PC-3 (cell line): ENCODE measurements at regions of chr11 and their contacts with region 1.

Region 1: GRCh38 chr11:117107701-117108590 is 9.7 kb upstream of the SIK3 start:
- DNase-seq: no peak
- ATAC-seq: no peak
- H3K4me3 ChIP-seq: no peak overlapping the region
- H3K27ac ChIP-seq: no peak overlapping the region
- H3K4me1 ChIP-seq: peaks cover 3% of the 10 kb centered on the region; the same call in 1 of the 2 replicates
- H3K27me3 ChIP-seq: no peaks in the 10 kb centered on the region
- CTCF ChIP-seq: no peak

Region 2: GRCh38 chr11:116732271-116733042 is 375.5 kb before region 1 on chr11:
- CTCF ChIA-PET with region 1: no interaction called
- POLR2A ChIA-PET with region 1: no interaction called
- intact Hi-C with region 1: loop called (anchors 2 kb)
- DNase-seq: peak; percentile 81
- ATAC-seq: peak; percentile 91
- H3K4me3 ChIP-seq: no peak overlapping the region
- H3K27ac ChIP-seq: no peak overlapping the region
- H3K4me1 ChIP-seq: no peaks in the 10 kb centered on the region
- H3K27me3 ChIP-seq: no peaks in the 10 kb centered on the region
- CTCF ChIP-seq: peak; percentile 84

Region 3: GRCh38 chr11:116772443-116773202 is 335.3 kb before region 1 on chr11 and contains the start of gene BUD13:
- CTCF ChIA-PET with region 1: no interaction called
- POLR2A ChIA-PET with region 1: no interaction called
- intact Hi-C with region 1: loop called (anchors 5 kb)
- DNase-seq: peak; percentile 94
- ATAC-seq: peak; percentile 86
- H3K4me3 ChIP-seq: peak within 1 kb of the TSS; percentile 98
- H3K27ac ChIP-seq: peak within 1 kb of the TSS; percentile 75
- H3K4me1 ChIP-seq: peaks cover 23% of the 10 kb centered on the region
- H3K27me3 ChIP-seq: no peaks in the 10 kb centered on the region
- CTCF ChIP-seq: no peak
- total RNA-seq, gene BUD13: 28.9 and 38.0 TPM in 2 replicates

Region 4: DNA sequence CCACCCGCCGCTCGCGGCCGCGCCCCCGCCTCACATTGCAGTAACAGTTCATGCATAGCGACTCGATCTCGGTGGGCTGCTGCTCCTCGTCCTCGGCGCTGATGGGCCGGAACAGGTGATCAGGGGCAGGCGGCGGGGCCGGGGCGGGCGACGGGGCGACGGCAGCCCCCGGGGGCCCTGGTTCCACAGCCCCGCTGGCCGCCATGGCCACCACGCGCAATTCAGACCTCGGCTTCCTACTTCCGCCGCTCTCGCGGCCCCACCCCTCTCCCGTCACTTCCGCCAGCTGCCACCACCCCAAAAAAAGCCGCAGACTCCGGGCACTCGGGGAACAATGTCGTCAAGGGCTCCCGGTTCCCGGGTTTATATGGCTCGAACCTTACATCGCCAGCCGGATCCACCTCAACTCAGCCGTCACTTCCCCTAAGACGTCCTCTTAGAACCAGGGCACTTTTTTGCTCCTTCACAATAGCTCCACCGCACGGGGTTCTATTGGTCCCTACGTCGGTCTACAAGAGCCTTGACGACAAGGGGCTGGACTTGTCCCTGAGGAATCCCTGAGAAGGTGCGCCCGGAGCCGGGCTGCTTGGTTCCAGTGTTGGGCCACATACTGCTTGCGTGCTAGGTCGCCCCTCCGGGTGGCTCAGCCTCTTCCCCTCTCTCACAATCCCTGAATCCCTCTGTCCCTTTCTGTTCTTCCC is 320.0 kb before region 1 on chr11 and contains the start of gene ZPR1:
- CTCF ChIA-PET with region 1: interaction called, 6 read pairs
- POLR2A ChIA-PET with region 1: no interaction called
- intact Hi-C with region 1: loop called (anchors 5 kb)
- DNase-seq: peak; percentile 64
- ATAC-seq: peak; percentile 81
- H3K4me3 ChIP-seq: peak within 1 kb of the TSS; percentile 83
- H3K27ac ChIP-seq: peak within 1 kb of the TSS; percentile 11; the same call in 1 of the 2 replicates
- H3K4me1 ChIP-seq: peaks cover 37% of the 10 kb centered on the region
- H3K27me3 ChIP-seq: no peaks in the 10 kb centered on the region
- CTCF ChIP-seq: no peak
- total RNA-seq, gene ZPR1: 86.5 and 89.5 TPM in 2 replicates

Region 5: GRCh38 chr11:116879800-116880625 is 227.9 kb before region 1 on chr11:
- CTCF ChIA-PET with region 1: interaction called, 3 read pairs
- POLR2A ChIA-PET with region 1: no interaction called
- intact Hi-C with region 1: loop called (anchors 1 kb)
- DNase-seq: peak; percentile 86
- ATAC-seq: peak; percentile 100
- H3K4me3 ChIP-seq: no peak overlapping the region
- H3K27ac ChIP-seq: no peak overlapping the region
- H3K4me1 ChIP-seq: no peaks in the 10 kb centered on the region; the same call in 1 of the 2 replicates
- H3K27me3 ChIP-seq: no peaks in the 10 kb centered on the region
- CTCF ChIP-seq: peak; percentile 93

Region 6: DNA sequence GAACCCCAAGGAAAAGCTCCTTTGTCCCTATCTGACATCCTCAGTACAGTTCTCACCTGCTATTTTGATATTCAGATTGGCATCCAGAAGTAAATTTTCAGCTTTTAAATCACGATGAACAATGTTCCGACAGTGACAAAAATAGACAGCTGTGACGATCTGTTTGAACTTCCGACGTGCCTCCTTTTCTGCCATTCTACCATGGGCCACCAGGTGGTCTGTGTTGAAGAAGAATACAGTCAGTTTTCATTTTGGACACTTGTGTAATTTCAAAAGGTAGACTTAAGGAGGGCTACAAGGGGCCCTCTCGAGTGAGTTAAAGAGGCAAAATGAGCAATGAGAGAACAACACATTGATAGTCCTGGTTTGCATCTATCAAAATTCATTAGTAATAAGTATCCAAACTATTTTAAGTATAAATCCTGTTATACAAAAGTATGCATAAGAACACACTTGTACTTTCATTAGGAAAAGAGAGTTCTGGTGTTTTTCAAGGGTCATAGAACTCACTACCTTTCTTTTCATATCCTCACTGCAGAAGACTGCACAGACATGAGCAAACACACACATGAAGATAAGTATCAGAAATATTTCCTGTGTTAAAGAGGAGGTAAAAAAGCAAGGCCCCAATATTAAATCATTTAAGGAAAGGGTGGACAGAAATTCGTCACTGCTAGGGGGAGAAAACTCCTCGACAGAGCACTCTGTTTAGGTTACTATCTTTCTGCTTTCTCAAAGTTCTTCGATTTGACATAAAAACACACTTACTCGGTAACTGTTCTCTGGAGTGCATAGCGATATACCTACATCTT is 180.6 kb before region 1 on chr11:
- CTCF ChIA-PET with region 1: no interaction called
- POLR2A ChIA-PET with region 1: no interaction called
- intact Hi-C with region 1: loop called (anchors 2 kb)
- DNase-seq: peak; percentile 39
- ATAC-seq: no peak
- H3K4me3 ChIP-seq: no peak overlapping the region
- H3K27ac ChIP-seq: no peak overlapping the region
- H3K4me1 ChIP-seq: peaks cover 18% of the 10 kb centered on the region
- H3K27me3 ChIP-seq: no peaks in the 10 kb centered on the region
- CTCF ChIP-seq: peak; percentile 66

Region 7: GRCh38 chr11:117226388-117227385 is 118.7 kb after region 1 on chr11:
- CTCF ChIA-PET with region 1: interaction called, 3 read pairs
- POLR2A ChIA-PET with region 1: no interaction called
- intact Hi-C with region 1: loop called (anchors 1 kb)
- DNase-seq: peak; percentile 83
- ATAC-seq: peak; percentile 73
- H3K4me3 ChIP-seq: no peak overlapping the region
- H3K27ac ChIP-seq: no peak overlapping the region
- H3K4me1 ChIP-seq: peaks cover 22% of the 10 kb centered on the region
- H3K27me3 ChIP-seq: no peaks in the 10 kb centered on the region
- CTCF ChIP-seq: peak; percentile 90